ENCODE measurements at regions of chr18 and their contacts with region 1.

Region 1: GRCh38 chr18:42305869-42306593 is 351.0 kb downstream of the PIK3C3 start:
- DNase-seq: no peak
- ATAC-seq: peak in 1 of 8 donors; percentile 63
- H3K4me3 ChIP-seq: no peak overlapping the region
- H3K27ac ChIP-seq: no peak overlapping the region
- H3K4me1 ChIP-seq: peaks cover 0 to 10% (median 7%) of the 10 kb centered on the region in 9 donors
- H3K27me3 ChIP-seq: no peaks in the 10 kb centered on the region
- CTCF ChIP-seq: no peak

Region 2: DNA sequence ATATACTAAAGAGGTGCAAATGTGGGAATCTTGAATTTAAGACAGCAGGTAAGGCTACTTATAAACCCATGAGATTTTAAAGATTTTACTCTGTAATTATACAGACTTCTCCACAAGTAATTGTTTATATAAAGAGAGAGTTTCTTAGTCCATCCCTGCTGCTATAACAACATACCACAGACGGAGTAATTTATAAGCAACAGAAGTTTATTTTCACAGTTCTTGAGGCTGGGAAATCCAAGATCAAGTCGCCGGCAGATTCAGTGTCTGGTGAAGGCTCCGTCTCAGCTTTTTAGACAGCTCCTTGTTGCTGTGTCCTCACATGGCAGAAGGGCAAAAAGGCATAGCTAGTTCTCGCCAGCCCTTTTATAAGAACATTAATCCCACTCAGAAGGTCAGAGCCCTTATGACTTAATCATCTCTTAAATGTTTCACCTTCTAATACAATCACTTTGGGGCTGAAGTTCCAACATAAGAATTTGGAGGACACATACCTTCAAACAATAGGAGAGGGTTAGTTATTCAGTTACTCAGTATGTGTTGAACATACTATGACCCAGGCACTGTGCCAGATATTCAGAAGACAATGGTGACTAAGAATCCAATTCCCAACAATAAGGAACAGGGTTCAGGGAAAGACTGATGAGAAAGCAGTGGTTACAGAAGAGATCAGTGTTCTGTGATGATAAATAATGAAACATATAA is 343.5 kb after region 1 on chr18:
- intact Hi-C with region 1: no loop called
- DNase-seq: no peak
- ATAC-seq: no peak
- H3K4me3 ChIP-seq: no peak overlapping the region
- H3K27ac ChIP-seq: no peak overlapping the region
- H3K4me1 ChIP-seq: no peaks in the 10 kb centered on the region
- H3K27me3 ChIP-seq: no peaks in the 10 kb centered on the region
- CTCF ChIP-seq: no peak

Region 3: DNA sequence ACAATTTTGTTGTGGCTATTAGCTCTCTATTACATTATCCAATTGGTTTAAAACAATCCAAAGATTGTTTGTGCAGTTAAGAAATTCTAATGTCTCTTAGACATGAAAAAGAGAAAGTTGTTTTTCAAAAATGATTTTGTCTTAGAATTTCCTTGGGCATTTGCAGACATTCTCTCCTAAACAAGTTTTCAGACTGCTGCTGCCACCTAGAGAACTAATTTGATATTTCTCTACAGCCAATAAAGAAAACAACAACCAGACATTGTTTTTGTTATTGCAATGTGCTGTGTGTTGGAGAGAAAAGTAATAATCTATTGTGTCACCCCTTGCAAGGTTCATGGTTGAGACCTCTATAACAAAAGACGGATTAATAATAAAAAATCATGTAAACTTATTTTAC is 1090.2 kb after region 1 on chr18:
- intact Hi-C with region 1: loop called in 1 of 10 experiments (anchors 10 kb)
- DNase-seq: no peak
- ATAC-seq: no peak
- H3K4me3 ChIP-seq: no peak overlapping the region
- H3K27ac ChIP-seq: no peak overlapping the region
- H3K4me1 ChIP-seq: no peaks in the 10 kb centered on the region
- H3K27me3 ChIP-seq: no peaks in the 10 kb centered on the region
- CTCF ChIP-seq: peak in 7 of 9 donors; percentile 29 to 56 (median 42)